ENCODE measurements at regions of chr6 and their contacts with region 1.

Region 1: GRCh38 chr6:43120944-43121913 is 45.1 kb downstream of the PTK7 start:
- DNase-seq: peak; percentile 94
- H3K4me3 ChIP-seq: peak overlapping the region; percentile 14; the same call in 1 of the 2 replicates
- H3K27ac ChIP-seq: peak overlapping the region; percentile 96
- H3K27me3 ChIP-seq: no peaks in the 10 kb centered on the region
- CTCF ChIP-seq: peak; percentile 20

Region 2: GRCh38 chr6:42978839-42979522 is 142.2 kb before region 1 on chr6 and contains the start of gene PEX6:
- CTCF ChIA-PET with region 1: no interaction called
- POLR2A ChIA-PET with region 1: interaction called, 10 read pairs
- DNase-seq: peak; percentile 50
- H3K4me3 ChIP-seq: peak within 1 kb of the TSS; percentile 78
- H3K27ac ChIP-seq: peak within 1 kb of the TSS; percentile 49
- H3K27me3 ChIP-seq: no peaks in the 10 kb centered on the region
- CTCF ChIP-seq: no peak
- polyA plus RNA-seq, gene PEX6: 6.8 and 7.4 TPM in 2 replicates

Region 3: GRCh38 chr6:43045371-43045930 is 75.8 kb before region 1 on chr6:
- CTCF ChIA-PET with region 1: no interaction called
- POLR2A ChIA-PET with region 1: no interaction called
- DNase-seq: no peak
- H3K4me3 ChIP-seq: no peak overlapping the region
- H3K27ac ChIP-seq: no peak overlapping the region
- H3K27me3 ChIP-seq: no peaks in the 10 kb centered on the region
- CTCF ChIP-seq: no peak

Region 4: DNA sequence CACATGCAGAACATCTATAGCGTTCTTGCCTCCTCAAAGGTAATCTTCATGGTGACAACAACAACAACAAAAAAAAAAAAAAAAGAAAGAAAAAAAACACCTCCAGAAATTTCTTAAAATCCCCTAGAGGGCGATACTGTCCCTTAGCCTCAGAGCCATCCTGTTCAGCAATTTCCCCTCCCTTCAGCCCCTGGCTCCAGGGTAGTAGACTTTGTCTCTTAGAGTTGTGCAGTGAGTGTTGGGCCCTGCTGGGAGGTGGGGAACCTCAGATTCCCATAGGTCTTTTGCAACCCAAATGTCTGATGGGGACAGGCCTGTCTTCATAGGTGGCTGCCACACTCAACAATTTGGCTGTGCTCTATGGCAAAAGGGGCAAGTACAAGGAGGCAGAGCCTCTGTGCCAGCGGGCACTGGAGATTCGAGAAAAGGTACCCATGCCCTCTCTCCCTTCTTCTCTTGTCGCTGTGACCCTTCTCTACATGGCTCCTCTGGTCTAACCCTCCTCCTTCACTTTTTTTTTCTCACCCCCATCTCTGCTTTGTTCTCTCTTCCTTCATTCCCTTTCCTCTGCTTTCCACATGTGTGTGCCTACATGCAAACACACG is 51.1 kb before region 1 on chr6:
- CTCF ChIA-PET with region 1: interaction called, 12 read pairs
- POLR2A ChIA-PET with region 1: interaction called, 19 read pairs
- DNase-seq: no peak
- H3K4me3 ChIP-seq: no peak overlapping the region
- H3K27ac ChIP-seq: no peak overlapping the region
- H3K27me3 ChIP-seq: no peaks in the 10 kb centered on the region
- CTCF ChIP-seq: peak; percentile 73

Region 5: GRCh38 chr6:43096451-43097097 is 24.7 kb before region 1 on chr6:
- CTCF ChIA-PET with region 1: no interaction called
- POLR2A ChIA-PET with region 1: interaction called, 10 read pairs
- DNase-seq: no peak
- H3K4me3 ChIP-seq: peak overlapping the region; percentile 31; the same call in 1 of the 2 replicates
- H3K27ac ChIP-seq: peak overlapping the region; percentile 88
- H3K27me3 ChIP-seq: no peaks in the 10 kb centered on the region
- CTCF ChIP-seq: no peak